ENCODE measurements at regions of chr19 and their contacts with region 1.

Region 1: DNA sequence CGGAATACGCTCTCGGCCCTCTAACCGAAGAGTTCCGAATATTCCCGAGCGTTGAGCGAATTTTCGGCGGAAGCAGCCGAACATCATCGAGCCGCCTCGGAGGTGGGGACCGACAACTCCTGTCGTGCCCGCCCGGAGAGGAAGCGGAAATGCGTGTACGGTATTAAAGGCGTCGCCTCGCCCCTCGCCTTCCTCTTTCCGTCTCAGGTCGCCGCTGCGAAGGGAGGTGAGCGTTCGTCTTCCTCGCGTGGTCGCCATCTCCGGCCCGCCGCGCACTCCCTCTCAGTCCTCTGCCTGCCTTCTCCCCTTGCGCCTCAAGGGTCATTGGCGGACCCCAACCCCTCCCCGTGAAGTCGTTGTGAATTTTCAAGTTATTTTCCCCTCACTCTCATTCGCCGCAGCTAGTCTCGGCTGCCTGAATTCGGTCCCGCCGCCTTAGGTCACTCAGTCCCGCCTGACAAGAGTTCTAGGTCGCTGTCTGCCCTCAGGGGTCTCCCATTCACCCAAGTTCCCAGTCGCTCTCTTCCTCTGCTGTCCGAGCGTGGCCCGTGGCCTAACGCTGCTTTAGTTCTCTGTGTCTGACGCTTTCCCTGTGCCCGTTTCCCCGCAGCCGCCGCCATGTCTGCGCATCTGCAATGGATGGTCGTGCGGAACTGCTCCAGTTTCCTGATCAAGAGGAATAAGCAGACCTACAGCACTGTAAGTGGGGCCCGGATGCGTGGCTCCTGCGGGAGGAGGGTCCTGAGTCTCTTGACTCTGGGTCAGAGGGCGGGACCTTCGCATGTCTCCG is at the start of gene RPL28:
- DNase-seq: peak; percentile 98 to 99 (median 98)
- H3K4me3 ChIP-seq: peak within 1 kb of the TSS; percentile 66 to 99 (median 91)
- H3K27ac ChIP-seq: peak within 1 kb of the TSS; percentile 78 to 100 (median 97)
- H3K27me3 ChIP-seq: no peaks in the 10 kb centered on the region
- CTCF ChIP-seq: peak in 16 of 56 donors; percentile 4 to 35 (median 22)
- total RNA-seq, gene RPL28: 315 to 923 (median 541) TPM

Region 2: GRCh38 chr19:55146078-55146704 is 239.7 kb before region 1 on chr19:
- intact Hi-C with region 1: loop called in 1 of 2 experiments (anchors 5 kb)
- DNase-seq: no peak
- H3K4me3 ChIP-seq: no peak overlapping the region
- H3K27ac ChIP-seq: no peak overlapping the region
- H3K27me3 ChIP-seq: peaks cover 0 to 90% (median 65%) of the 10 kb centered on the region in 45 donors
- CTCF ChIP-seq: no peak

Region 3: DNA sequence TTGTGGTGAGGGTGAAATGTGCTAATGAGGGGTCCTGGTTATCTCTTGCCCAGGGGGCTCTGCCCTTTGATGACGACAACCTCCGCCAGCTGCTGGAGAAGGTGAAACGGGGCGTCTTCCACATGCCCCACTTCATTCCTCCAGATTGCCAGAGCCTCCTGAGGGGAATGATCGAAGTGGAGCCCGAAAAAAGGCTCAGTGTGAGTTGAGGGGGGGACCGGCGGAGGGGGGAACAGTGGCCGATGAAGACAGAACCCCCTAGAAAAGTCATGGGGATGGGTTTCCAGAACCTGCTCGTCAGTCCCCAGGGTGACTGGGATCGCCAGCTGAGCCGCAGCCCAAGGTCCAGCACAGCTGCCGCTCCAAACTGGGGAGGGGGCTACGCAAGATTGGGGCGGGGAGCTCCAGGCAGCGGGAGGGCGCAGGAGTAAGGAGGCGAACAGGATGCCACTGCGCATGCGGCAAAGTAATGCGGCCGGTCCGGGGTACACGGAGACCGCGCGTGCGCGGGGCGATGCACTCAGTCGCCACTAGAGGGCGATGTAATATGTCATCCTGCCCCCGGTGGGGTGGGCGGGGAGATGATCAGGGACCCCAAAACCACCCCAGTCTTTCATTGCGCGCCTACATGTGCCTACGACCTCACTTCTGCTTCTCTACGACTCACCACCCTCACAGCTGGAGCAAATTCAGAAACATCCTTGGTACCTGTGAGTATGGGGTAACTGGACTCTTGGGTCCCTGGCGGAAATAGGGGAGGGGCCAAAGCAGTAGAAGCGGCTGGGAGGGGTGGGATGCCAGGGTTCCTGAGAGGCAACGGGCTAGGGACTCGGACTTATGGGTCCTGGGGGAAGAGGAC is 84.2 kb before region 1 on chr19:
- intact Hi-C with region 1: loop called (anchors 2 to 5 kb)
- DNase-seq: peak; percentile 80 to 90 (median 85)
- H3K4me3 ChIP-seq: peak overlapping the region in 55 of 59 donors; percentile 7 to 61 (median 41)
- H3K27ac ChIP-seq: peak overlapping the region in 57 of 59 donors; percentile 5 to 92 (median 81)
- H3K27me3 ChIP-seq: no peaks in the 10 kb centered on the region
- CTCF ChIP-seq: peak in 55 of 56 donors; percentile 97 to 100 (median 99)

Region 4: GRCh38 chr19:55407800-55408532 is 22.0 kb after region 1 on chr19:
- intact Hi-C with region 1: loop called (anchors 1 to 2 kb)
- DNase-seq: peak; percentile 96 to 100 (median 99)
- H3K4me3 ChIP-seq: peak overlapping the region; percentile 72 to 99 (median 95)
- H3K27ac ChIP-seq: peak overlapping the region; percentile 80 to 99 (median 95)
- H3K27me3 ChIP-seq: no peaks in the 10 kb centered on the region
- CTCF ChIP-seq: peak in 16 of 56 donors; percentile 5 to 35 (median 14)

Region 5: GRCh38 chr19:55452749-55453346 is 66.9 kb after region 1 on chr19:
- intact Hi-C with region 1: loop called (anchors 2 to 5 kb)
- DNase-seq: peak; percentile 89 to 97 (median 96)
- H3K4me3 ChIP-seq: peak overlapping the region; percentile 40 to 89 (median 74)
- H3K27ac ChIP-seq: peak overlapping the region in 58 of 59 donors; percentile 33 to 96 (median 88)
- H3K27me3 ChIP-seq: peaks cover 0 to 6% (median 0%) of the 10 kb centered on the region in 45 donors
- CTCF ChIP-seq: peak in 54 of 56 donors; percentile 10 to 73 (median 50)

Measured in dorsolateral prefrontal cortex (tissue), 120 donors.